WTC11 (cell line): ENCODE measurements at regions of chr10 and their contacts with region 1.

Region 1: DNA sequence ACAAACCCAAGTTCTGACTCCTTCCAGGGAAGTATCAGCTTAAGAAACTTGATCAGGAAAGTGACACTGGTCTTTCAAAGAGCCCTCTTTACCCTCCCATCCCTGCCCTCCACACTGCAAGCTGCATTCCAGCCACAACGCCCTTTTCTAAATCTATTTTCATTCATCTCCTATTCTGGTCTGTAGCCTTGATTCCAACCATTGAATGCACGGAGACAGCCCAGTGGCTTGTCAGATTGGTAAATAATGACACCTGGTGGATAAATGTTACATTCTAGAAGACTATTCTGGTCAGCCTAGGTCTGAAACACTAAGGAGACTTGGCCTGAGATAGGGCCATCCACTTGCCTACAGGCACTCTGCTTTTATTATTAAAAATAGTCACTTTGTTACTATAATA is 20.9 kb downstream of the MORN4 start:
- DNase-seq: no peak
- ATAC-seq: peak; percentile 86
- H3K4me3 Mint-ChIP-seq: no peak overlapping the region
- H3K27ac Mint-ChIP-seq: no peak overlapping the region; the same call in 1 of the 2 replicates
- H3K4me1 Mint-ChIP-seq: peaks cover 14% of the 10 kb centered on the region
- H3K27me3 Mint-ChIP-seq: no peaks in the 10 kb centered on the region
- CTCF ChIP-seq: no peak

Region 2: DNA sequence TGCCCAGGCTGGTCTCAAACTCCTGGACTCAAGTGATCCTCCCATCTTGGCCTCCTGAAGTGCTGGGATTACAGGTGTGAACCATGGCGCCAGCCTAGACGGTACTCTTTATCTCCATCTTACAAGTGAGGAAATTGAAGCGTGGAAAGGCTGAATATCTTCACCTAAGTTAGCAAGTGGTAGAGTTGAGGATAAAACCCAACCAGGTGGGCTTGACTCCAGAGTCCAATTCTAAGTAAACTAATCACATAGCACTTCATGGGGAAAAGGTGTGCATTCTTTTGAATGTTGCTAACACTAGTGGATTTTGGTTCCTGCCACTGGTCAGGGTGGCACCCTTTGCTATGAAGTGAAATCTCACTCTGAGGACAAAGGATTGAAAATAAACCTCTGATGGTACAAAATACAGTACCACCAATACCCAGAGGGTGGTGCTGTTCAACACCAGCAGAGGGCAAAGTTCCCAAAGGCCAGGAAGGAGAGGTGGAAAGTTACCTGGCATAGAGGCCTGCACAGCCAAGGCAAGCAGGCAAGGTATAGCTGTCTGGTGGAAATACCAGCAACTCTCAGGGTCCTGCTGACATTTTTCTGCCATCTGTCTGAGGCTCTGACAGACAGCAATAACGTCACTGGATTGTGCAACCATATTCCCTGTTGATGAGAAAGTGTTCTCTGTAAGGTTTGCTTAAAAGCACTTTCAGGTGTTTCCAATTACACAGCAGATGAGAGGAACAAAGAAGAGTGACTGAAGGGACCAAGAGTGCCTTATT is 148.8 kb before region 1 on chr10:
- CTCF ChIA-PET with region 1: interaction called, 21 read pairs
- POLR2A ChIA-PET with region 1: no interaction called
- DNase-seq: peak; percentile 52
- ATAC-seq: peak; percentile 91
- H3K4me3 Mint-ChIP-seq: no peak overlapping the region
- H3K27ac Mint-ChIP-seq: peak overlapping the region; percentile 60
- H3K4me1 Mint-ChIP-seq: no peaks in the 10 kb centered on the region
- H3K27me3 Mint-ChIP-seq: no peaks in the 10 kb centered on the region
- CTCF ChIP-seq: peak; percentile 79

Region 3: DNA sequence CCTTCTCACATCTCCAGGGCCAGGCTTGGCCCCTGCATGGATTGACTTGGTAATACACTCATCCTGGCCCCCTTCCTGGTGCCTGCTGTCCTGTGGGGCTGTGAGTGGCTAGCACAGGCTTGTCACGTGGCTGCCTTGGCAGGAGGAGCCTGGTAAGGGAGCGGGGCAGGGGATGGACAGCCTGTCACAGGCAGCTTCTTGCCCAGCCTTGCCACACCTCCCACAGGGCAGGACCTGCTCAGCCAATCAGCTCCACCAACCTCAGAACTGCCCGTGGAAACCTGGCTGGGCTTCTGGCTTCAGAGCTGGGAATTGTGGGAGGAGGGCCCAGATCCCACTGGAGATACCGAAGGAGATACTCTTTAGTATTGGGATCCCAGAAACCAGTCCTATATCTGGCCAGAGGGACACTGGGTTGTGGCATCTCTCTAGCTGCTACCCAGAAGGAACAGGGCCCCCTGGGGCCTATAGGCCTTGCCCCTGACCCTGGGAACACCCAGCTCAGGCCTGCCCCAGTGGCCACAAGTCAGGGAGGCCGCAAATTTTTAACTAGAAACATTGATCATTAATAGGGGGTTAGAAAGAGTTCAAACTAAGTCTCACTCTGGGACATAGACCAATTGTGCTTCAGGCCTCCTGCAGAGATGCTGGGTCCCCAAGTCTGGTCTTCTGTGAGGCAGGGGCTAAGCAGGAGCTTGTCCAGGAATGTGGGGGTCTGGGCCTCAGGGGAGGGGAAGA is 28.2 kb before region 1 on chr10 and contains the start of gene HOGA1:
- CTCF ChIA-PET with region 1: interaction called, 12 read pairs
- POLR2A ChIA-PET with region 1: no interaction called
- DNase-seq: peak; percentile 52
- ATAC-seq: peak; percentile 98
- H3K4me3 Mint-ChIP-seq: no peak within 1 kb of the TSS
- H3K27ac Mint-ChIP-seq: no peak within 1 kb of the TSS
- H3K4me1 Mint-ChIP-seq: 0 out of 2 replicates have a peak, but pooled peaks cover 7% of the 10 kb centered on the region
- H3K27me3 Mint-ChIP-seq: no peaks in the 10 kb centered on the region
- CTCF ChIP-seq: no peak
- total RNA-seq, gene HOGA1: 0.15 to 0.62 TPM (median 0.55 TPM) in 3 replicates

Region 4: DNA sequence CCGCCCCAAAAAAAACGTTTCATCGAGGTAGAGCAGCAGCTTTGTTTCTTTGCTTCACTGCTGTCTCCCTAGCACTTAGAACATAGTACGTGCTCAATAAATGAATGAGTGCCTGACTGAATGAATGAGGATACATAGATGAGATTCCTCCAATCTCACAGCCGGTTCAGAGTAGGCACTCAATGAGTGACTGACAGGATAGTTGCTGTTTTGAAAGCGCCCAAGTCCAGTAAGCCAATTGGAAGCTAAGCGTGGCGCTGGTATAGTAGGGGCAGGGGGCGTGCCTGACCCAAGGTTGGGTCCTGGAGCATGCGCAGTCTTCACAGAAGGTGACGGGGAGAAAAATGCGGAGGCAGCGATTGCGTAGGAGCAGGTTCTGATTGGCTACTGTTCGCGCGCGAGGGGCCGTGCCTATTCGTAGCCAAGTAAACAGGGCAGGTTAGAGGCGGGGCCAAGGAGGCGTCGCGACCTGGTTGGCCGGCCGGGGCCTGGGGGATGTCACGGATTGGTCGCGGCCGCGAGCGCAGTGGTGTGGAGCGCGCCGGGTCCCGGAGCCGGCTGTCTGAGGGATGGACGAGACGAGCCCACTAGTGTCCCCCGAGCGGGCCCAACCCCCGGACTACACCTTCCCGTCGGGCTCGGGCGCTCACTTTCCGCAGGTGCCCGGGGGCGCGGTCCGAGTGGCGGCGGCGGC is 27.9 kb after region 1 on chr10 and contains the start of gene PI4K2A:
- CTCF ChIA-PET with region 1: no interaction called
- POLR2A ChIA-PET with region 1: no interaction called
- DNase-seq: peak; percentile 100
- ATAC-seq: peak; percentile 98
- H3K4me3 Mint-ChIP-seq: peak within 1 kb of the TSS; percentile 94
- H3K27ac Mint-ChIP-seq: peak within 1 kb of the TSS; percentile 99
- H3K4me1 Mint-ChIP-seq: peaks cover 27% of the 10 kb centered on the region
- H3K27me3 Mint-ChIP-seq: no peaks in the 10 kb centered on the region
- CTCF ChIP-seq: no peak
- total RNA-seq, gene PI4K2A: 18.6 to 19.6 TPM (median 19.5 TPM) in 3 replicates